Left cardiac atrium (tissue), 4 donors: ENCODE measurements at regions of chr6 and their contacts with region 1.

Region 1: GRCh38 chr6:130322673-130323268 is 43.0 kb upstream of the TMEM200A start:
- DNase-seq: peak; percentile 26
- ATAC-seq: no peak

Region 2: DNA sequence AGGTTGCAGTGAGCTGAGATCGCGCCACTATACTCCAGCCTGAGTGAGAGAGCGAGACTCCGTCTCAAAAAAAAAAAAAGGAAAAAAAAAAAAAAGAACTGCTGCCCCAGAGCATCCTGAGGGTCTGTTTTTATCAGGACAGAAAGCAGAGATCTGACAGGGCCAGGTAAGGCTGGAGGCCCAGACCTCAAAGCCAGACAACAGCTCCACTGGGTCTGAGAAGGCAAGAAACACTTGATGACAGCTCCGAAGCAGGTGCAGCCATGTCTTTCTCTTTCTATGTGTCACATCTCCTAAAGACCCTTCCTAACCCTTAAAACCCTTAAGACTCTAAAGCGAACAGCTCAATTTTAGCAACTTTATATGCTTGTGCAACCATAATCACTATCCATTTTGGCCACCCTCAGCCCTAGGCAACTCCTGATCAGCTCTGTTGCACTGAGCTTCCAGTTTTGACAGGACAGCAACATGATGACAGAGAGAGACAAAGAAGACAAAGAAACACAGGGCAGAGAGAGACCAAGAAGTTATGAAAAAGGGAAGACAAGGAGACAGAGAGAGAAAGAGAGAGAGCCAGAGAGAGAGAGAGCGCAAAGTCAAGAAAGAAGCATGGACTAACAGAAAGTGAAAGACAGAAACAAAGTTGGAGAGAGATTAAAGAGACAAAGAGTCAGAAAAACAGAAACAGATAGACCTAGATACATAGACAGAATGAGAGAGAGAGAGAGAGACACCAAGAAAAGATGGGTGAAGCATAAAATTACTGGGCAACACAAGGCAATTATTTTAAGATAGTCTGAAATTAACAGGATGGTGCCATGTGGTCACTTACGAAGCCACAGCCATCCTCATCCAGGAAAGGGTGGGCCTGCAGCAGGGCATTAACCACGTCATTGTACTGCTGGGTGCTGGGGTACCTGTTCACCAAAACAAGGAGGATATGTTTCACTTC is 139.2 kb before region 1 on chr6:
- intact Hi-C with region 1: no loop called
- DNase-seq: no peak
- ATAC-seq: no peak

Region 3: GRCh38 chr6:130453230-130453629 is 130.5 kb after region 1 on chr6:
- intact Hi-C with region 1: no loop called
- DNase-seq: no peak
- ATAC-seq: no peak

Region 4: GRCh38 chr6:130697995-130698535 is 375.3 kb after region 1 on chr6:
- intact Hi-C with region 1: loop called in 1 of 2 experiments (anchors 5 kb)
- DNase-seq: peak; percentile 26
- ATAC-seq: peak; percentile 72 to 77

Region 5: GRCh38 chr6:130872250-130873095 is 549.7 kb after region 1 on chr6:
- intact Hi-C with region 1: loop called in 1 of 2 experiments (anchors 5 kb)
- DNase-seq: peak; percentile 74
- ATAC-seq: peak; percentile 41 to 52